GM12878 (cell line): ENCODE measurements at regions of chr11 and their contacts with region 1.

Region 1: DNA sequence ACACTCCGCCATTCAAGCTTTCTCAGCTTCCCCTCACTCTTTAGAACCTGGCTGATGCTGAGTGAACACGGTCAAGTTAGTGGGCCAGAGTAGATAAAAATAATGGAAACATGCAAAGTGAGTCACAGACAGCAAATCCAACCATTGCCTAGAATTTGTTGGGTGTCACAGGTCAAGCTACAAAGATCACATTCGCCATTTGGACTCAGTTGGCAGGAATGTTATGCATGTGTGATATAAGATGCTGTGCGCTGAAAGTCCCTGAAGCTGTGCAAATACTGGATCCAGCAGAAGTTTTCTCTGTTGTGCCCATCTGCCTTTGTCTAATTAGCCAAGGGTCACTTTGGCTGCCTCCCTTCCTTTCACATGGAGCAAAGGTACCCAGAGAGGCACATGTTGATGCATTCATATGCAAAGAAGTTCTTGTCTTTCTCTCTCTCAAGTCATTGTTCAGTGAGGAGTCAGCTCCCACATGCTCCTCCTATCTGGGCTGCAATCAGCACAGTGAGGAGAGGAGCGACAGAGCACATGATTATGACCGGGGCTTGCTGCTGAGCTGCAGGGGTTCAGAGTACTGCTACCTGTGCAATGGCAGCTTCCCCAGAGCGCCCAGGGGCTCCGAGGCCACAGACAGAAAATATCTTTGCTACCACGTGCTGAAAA is 39.7 kb downstream of the FLI1 start:
- DNase-seq: no peak
- ATAC-seq: peak; percentile 55
- H3K4me3 ChIP-seq: peak overlapping the region; percentile 24; the same call in 1 of the 2 replicates
- H3K27ac ChIP-seq: peak overlapping the region; percentile 91
- H3K4me1 ChIP-seq: peaks cover 89% of the 10 kb centered on the region
- H3K27me3 ChIP-seq: no peaks in the 10 kb centered on the region
- CTCF ChIP-seq: no peak
- EP300 ChIP-seq: no peak
- POLR2A ChIP-seq: 0 out of 2 replicates have a peak, but pooled peaks have one; percentile 31
- RAD21 ChIP-seq: no peak

Region 2: DNA sequence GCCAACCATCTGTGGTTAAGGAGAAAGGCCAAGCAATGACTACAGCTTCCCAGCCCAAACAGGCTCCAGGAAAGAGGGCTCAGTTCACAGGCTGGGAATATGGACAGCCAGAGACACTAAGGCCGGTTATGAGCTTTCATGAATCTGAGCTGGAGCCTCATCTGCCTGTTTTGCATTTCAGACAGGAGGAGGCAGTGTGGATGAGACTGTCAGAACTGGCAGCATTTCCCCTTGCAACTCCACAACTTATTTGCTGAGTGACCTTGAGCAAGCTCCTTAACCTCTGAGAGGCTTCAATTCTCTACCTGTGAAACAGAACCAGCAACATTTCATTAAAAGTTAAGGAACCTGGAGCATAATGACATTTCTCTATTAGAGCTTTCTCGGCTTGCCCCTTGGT is 410.2 kb before region 1 on chr11:
- CTCF ChIA-PET with region 1: no interaction called
- POLR2A ChIA-PET with region 1: no interaction called
- RAD21 ChIA-PET with region 1: interaction called, 3 read pairs
- SMC1A ChIA-PET with region 1: interaction called, 3 read pairs
- in situ Hi-C with region 1: no loop called
- intact Hi-C with region 1: loop called (anchors 5 kb)
- DNase-seq: no peak
- ATAC-seq: peak; percentile 43
- H3K4me3 ChIP-seq: no peak overlapping the region
- H3K27ac ChIP-seq: no peak overlapping the region
- H3K4me1 ChIP-seq: peaks cover 11% of the 10 kb centered on the region
- H3K27me3 ChIP-seq: no peaks in the 10 kb centered on the region
- CTCF ChIP-seq: peak; percentile 41 to 46 (median 45); a peak in 5 of 6 replicates
- EP300 ChIP-seq: no peak
- POLR2A ChIP-seq: no peak
- RAD21 ChIP-seq: peak; percentile 74

Region 3: GRCh38 chr11:128412847-128413791 is 320.5 kb before region 1 on chr11:
- CTCF ChIA-PET with region 1: no interaction called
- POLR2A ChIA-PET with region 1: no interaction called
- RAD21 ChIA-PET with region 1: no interaction called
- SMC1A ChIA-PET with region 1: no interaction called
- in situ Hi-C with region 1: no loop called
- intact Hi-C with region 1: loop called (anchors 5 kb)
- DNase-seq: peak; percentile 82
- ATAC-seq: peak; percentile 76
- H3K4me3 ChIP-seq: peak overlapping the region; percentile 47; the same call in 1 of the 2 replicates
- H3K27ac ChIP-seq: peak overlapping the region; percentile 75
- H3K4me1 ChIP-seq: peaks cover 6% of the 10 kb centered on the region
- H3K27me3 ChIP-seq: no peaks in the 10 kb centered on the region
- CTCF ChIP-seq: no peak
- EP300 ChIP-seq: peak; percentile 45 to 76; a peak in 2 of 4 replicates
- POLR2A ChIP-seq: no peak
- RAD21 ChIP-seq: no peak

Region 4: GRCh38 chr11:128695539-128696221 is 37.9 kb before region 1 on chr11:
- CTCF ChIA-PET with region 1: interaction called, 7 read pairs
- POLR2A ChIA-PET with region 1: interaction called, 5 read pairs
- RAD21 ChIA-PET with region 1: interaction called, 12 read pairs
- SMC1A ChIA-PET with region 1: interaction called, 26 read pairs
- in situ Hi-C with region 1: no loop called
- intact Hi-C with region 1: loop called (anchors 2 kb)
- DNase-seq: no peak
- ATAC-seq: peak; percentile 40
- H3K4me3 ChIP-seq: peak overlapping the region; percentile 95
- H3K27ac ChIP-seq: peak overlapping the region; percentile 81
- H3K4me1 ChIP-seq: peaks cover 28% of the 10 kb centered on the region
- H3K27me3 ChIP-seq: no peaks in the 10 kb centered on the region
- CTCF ChIP-seq: no peak
- EP300 ChIP-seq: no peak
- POLR2A ChIP-seq: no peak
- RAD21 ChIP-seq: no peak

Region 5: DNA sequence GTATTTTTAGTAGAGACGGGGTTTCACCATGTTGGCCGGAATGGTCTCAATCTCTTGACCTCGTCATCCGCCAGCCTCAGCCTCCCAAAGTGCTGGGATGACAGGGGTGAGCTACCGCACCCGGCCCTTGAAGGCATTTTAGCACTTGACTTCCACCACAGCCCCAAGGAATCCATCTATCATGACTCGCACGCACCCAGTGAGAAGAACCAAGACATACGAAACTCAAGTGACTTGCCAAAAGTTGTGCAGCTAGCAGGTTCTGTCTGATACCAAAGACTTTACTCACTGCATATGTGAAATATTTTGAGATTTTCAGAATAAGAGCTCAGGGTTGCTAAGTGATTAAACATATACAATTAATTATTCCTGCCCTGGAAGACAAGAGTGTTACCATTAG is 18.7 kb before region 1 on chr11:
- CTCF ChIA-PET with region 1: interaction called, 19 read pairs
- POLR2A ChIA-PET with region 1: interaction called, 72 read pairs
- RAD21 ChIA-PET with region 1: interaction called, 85 read pairs
- SMC1A ChIA-PET with region 1: interaction called, 263 read pairs
- in situ Hi-C with region 1: no loop called
- intact Hi-C with region 1: loop called (anchors 2 kb)
- DNase-seq: no peak
- ATAC-seq: no peak
- H3K4me3 ChIP-seq: no peak overlapping the region
- H3K27ac ChIP-seq: no peak overlapping the region
- H3K4me1 ChIP-seq: peaks cover 57% of the 10 kb centered on the region
- H3K27me3 ChIP-seq: no peaks in the 10 kb centered on the region
- CTCF ChIP-seq: no peak
- EP300 ChIP-seq: no peak
- POLR2A ChIP-seq: no peak
- RAD21 ChIP-seq: no peak

Region 6: DNA sequence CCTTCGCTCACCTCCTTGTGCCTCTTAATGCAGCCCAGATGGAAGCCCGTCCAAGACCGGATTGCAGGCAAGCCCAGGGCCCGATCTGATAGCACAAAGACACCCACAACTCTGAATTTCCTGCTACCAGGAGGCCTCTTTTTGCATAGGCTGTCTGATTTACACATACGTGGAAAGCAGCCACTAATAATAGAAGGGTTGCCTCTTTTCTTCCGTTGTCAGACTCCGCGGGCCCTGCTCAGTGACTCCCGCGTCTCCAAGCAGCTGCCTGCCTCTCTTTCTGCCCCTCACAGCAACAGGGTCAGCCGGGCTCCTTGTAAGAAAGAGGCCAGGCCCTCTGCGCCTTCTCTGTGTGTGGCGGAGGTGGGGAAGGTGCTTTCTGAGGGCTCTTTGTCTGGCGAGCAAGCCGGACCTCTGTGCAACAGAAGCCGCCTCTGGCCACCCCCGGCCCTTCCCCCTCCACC is 13.0 kb before region 1 on chr11:
- CTCF ChIA-PET with region 1: interaction called, 19 read pairs
- POLR2A ChIA-PET with region 1: interaction called, 72 read pairs
- RAD21 ChIA-PET with region 1: interaction called, 85 read pairs
- SMC1A ChIA-PET with region 1: interaction called, 263 read pairs
- in situ Hi-C with region 1: no loop called
- intact Hi-C with region 1: loop called (anchors 2 kb)
- DNase-seq: no peak
- ATAC-seq: peak; percentile 59
- H3K4me3 ChIP-seq: peak overlapping the region; percentile 78
- H3K27ac ChIP-seq: peak overlapping the region; percentile 94
- H3K4me1 ChIP-seq: peaks cover 85% of the 10 kb centered on the region
- H3K27me3 ChIP-seq: no peaks in the 10 kb centered on the region
- CTCF ChIP-seq: no peak
- EP300 ChIP-seq: no peak
- POLR2A ChIP-seq: peak; percentile 84
- RAD21 ChIP-seq: 0 out of 2 replicates have a peak, but pooled peaks have one; percentile 1